ENCODE measurements at regions of chr15 and their contacts with region 1.

Region 1: DNA sequence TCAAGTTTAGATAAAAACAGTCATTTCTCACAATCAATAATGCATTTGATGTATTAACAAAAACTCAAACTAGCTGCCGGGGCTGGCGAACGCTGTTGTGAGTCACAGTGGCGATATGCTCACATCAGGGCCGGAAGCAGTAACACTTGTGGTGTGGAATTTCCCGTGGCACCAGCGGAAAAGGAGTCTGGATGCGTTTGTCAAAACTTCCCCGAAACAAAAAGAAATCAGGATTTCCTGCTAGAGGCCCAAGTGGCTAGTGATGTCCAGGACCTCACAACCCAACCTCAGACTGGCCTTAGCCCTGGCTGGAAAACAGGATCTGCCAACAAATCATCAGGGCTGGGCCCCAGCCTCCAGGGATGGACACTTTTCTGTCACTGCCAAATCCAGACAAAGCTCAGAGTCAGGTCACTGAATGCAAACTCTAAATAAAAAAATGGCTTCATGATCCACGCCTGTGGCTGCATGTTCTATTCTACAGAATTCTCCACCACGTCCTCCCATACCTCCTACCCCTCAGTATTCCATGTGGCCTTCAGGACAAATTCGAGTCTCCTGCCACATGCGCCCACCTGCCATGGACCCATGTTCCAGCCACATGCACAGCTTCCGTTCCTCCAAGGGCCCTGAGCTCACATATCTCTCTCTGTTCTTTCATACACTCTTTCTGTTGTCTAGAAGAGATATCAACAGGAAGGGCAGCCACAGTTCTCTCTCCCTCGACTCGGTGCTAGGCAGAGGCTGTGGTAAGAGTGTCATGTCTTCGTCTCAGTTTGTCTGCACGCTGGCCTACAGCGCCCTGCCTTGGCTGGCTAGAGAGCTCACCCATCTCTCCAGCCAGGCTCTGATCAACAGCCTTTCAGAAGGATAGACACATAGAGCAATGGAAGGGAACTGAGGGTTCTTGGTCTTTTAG is 35.4 kb downstream of the EHD4 start:
- DNase-seq: peak; percentile 83
- ATAC-seq: peak; percentile 85
- H3K4me3 Mint-ChIP-seq: peak overlapping the region; percentile 49
- H3K27ac Mint-ChIP-seq: peak overlapping the region; percentile 95
- H3K4me1 Mint-ChIP-seq: peaks cover 62% of the 10 kb centered on the region
- H3K27me3 Mint-ChIP-seq: no peaks in the 10 kb centered on the region

Region 2: DNA sequence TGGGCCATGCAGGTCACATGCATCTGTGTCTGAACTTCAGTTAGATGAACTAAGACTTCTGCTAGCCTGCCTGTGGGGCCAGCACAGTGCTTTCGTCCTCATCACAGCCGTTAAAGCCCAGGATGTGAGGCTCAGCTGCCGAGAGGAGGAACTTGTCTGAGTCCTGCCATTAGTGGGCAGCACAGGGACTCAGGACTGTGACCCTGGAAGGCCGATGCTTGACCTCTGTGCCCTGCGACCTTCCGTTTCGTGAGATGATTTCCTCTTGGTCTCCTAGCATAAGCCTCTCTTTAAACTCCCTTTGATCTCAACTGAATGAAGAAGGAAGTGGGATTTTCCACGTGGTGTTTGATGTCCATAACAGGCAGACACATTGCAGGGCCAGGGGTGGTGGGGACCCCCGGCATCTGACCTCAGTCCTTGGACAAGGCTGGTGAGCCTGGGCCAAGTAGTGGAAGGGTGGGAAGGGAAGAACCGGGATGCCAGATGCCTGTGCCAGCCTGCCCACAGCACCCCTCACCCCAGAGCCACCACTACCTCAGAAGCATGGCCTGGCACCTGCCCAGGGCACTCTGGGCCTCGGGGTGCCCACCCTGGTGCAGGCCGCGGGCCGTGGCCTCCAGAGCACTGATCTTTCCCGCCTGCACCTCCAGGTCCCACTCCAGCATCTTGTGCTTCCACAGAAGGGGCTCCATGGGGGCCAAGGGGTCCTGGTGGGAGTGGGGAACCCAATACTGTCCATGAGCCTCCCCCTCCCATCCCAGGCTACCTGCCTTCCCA is 76.7 kb before region 1 on chr15:
- CTCF ChIA-PET with region 1: no interaction called
- POLR2A ChIA-PET with region 1: no interaction called
- DNase-seq: no peak
- ATAC-seq: no peak
- H3K4me3 Mint-ChIP-seq: no peak overlapping the region
- H3K27ac Mint-ChIP-seq: no peak overlapping the region
- H3K4me1 Mint-ChIP-seq: peaks cover 15% of the 10 kb centered on the region
- H3K27me3 Mint-ChIP-seq: no peaks in the 10 kb centered on the region

Region 3: GRCh38 chr15:41894791-41895463 is 42.0 kb before region 1 on chr15:
- CTCF ChIA-PET with region 1: interaction called, 10 read pairs
- POLR2A ChIA-PET with region 1: interaction called, 5 read pairs
- DNase-seq: peak; percentile 94
- ATAC-seq: peak; percentile 100
- H3K4me3 Mint-ChIP-seq: peak overlapping the region; percentile 44
- H3K27ac Mint-ChIP-seq: peak overlapping the region; percentile 96
- H3K4me1 Mint-ChIP-seq: peaks cover 51% of the 10 kb centered on the region
- H3K27me3 Mint-ChIP-seq: no peaks in the 10 kb centered on the region

Region 4: GRCh38 chr15:41915255-41915994 is 21.5 kb before region 1 on chr15:
- CTCF ChIA-PET with region 1: interaction called, 15 read pairs
- POLR2A ChIA-PET with region 1: no interaction called
- DNase-seq: no peak
- ATAC-seq: no peak
- H3K4me3 Mint-ChIP-seq: no peak overlapping the region
- H3K27ac Mint-ChIP-seq: no peak overlapping the region
- H3K4me1 Mint-ChIP-seq: peaks cover 21% of the 10 kb centered on the region
- H3K27me3 Mint-ChIP-seq: no peaks in the 10 kb centered on the region

Region 5: DNA sequence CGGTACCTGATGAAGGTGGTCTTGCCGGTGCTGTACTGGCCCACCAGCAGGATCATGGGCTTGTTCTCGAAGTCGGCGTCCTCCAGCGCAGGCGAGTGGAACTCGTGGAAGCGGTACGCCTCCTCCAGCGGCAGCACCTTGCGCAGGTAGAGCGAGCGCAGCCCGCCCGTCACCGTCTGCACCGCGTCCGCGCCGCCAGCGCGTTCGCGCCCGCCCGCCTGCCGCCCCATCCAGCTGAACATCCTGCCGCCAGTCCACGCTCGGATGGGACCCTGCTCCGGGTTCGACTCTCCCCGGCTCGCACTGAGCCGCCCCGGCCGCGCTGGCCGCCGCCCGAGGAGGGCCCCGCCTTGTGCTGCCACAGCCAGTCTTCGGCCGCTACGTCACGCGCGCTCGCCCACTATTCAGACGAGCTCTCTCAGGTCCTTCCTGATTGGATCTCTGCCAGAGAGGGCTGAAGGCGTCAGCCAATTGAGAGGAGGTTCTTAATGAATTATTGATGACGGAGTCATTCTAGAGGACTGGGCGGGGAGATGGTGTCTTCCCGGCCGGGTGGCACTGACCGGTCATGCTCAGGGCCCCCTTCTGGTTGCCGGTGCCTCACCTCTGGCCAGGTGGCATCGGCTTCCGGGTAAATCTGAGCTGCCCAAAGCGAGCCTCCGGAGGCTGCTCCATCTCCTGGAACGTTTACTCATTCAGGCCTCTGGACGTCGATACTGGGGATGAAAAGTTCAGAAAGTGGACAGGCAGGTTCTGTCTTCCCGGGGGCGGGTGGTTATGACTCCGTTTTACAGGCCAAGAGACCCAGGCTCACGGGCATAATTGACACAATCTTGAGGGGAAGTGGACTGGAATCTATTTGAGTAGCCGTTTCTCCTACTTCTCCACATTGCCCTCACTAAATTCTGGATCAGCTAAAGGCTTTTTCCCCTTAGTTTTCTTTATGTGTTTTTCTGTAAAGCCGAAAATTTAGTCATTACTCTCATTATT is 35.6 kb after region 1 on chr15 and contains the start of gene EHD4:
- CTCF ChIA-PET with region 1: interaction called, 23 read pairs
- POLR2A ChIA-PET with region 1: interaction called, 45 read pairs
- DNase-seq: peak; percentile 97
- ATAC-seq: peak; percentile 93
- H3K4me3 Mint-ChIP-seq: peak within 1 kb of the TSS; percentile 83
- H3K27ac Mint-ChIP-seq: peak within 1 kb of the TSS; percentile 87
- H3K4me1 Mint-ChIP-seq: peaks cover 44% of the 10 kb centered on the region
- H3K27me3 Mint-ChIP-seq: peaks cover 28% of the 10 kb centered on the region
- total RNA-seq, gene EHD4: 6.9 to 8.0 TPM